ENCODE measurements at regions of chr11 and their contacts with region 1.

Region 1: GRCh38 chr11:61792310-61793085 is at the starts of genes FEN1 and TMEM258:
- DNase-seq: peak; percentile 94
- ATAC-seq: peak; percentile 93
- H3K4me3 Mint-ChIP-seq: peak within 1 kb of the TSS; percentile 90
- H3K27ac Mint-ChIP-seq: peak within 1 kb of the TSS; percentile 100
- H3K4me1 Mint-ChIP-seq: peaks cover 47% of the 10 kb centered on the region
- H3K27me3 Mint-ChIP-seq: no peaks in the 10 kb centered on the region
- total RNA-seq, gene FEN1: 141 to 150 TPM
- total RNA-seq, gene TMEM258: 138 to 157 TPM

Region 2: DNA sequence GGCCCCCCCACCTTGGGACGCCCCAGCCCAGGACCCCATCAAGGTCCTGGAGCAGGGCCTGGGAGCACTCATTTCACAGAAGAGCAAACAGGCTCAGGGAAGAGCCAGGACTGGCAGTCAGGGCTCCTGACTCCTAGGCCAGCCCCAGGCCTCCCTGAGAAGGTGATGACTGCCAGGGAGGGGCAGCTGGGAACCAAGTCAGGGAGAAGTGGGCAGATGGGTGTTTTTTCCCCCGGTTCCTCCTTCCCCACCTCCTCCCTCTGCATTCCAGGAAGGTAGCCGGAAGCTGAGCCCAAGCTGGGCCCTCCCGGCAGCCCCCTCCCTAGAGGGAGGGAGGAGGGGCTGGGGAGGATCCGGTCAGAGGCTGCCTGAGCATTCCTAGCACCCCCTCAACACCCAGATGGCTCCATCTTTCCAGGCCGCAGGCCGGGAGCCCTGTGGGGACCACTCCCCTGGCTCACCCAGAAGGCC is 20.5 kb before region 1 on chr11:
- CTCF ChIA-PET with region 1: interaction called, 10 read pairs
- DNase-seq: no peak
- ATAC-seq: no peak
- H3K4me3 Mint-ChIP-seq: no peak overlapping the region
- H3K27ac Mint-ChIP-seq: no peak overlapping the region
- H3K4me1 Mint-ChIP-seq: peaks cover 15% of the 10 kb centered on the region
- H3K27me3 Mint-ChIP-seq: peaks cover 5% of the 10 kb centered on the region

Region 3: GRCh38 chr11:61816736-61817455 is 24.4 kb after region 1 on chr11 and contains the start of gene FADS1:
- CTCF ChIA-PET with region 1: interaction called, 173 read pairs
- DNase-seq: peak; percentile 88
- ATAC-seq: peak; percentile 67
- H3K4me3 Mint-ChIP-seq: peak within 1 kb of the TSS; percentile 92
- H3K27ac Mint-ChIP-seq: peak within 1 kb of the TSS; percentile 91
- H3K4me1 Mint-ChIP-seq: peaks cover 11% of the 10 kb centered on the region
- H3K27me3 Mint-ChIP-seq: peaks cover 15% of the 10 kb centered on the region
- total RNA-seq, gene FADS1: 33.8 to 35.4 TPM

Region 4: GRCh38 chr11:61834278-61835048 is 42.0 kb after region 1 on chr11:
- CTCF ChIA-PET with region 1: interaction called, 15 read pairs
- DNase-seq: peak; percentile 91
- ATAC-seq: peak; percentile 99
- H3K4me3 Mint-ChIP-seq: peak overlapping the region; percentile 35
- H3K27ac Mint-ChIP-seq: peak overlapping the region; percentile 89
- H3K4me1 Mint-ChIP-seq: peaks cover 61% of the 10 kb centered on the region
- H3K27me3 Mint-ChIP-seq: no peaks in the 10 kb centered on the region

Region 5: GRCh38 chr11:61891331-61892084 is 99.0 kb after region 1 on chr11 and contains the start of gene FADS3:
- CTCF ChIA-PET with region 1: interaction called, 16 read pairs
- DNase-seq: peak; percentile 66
- ATAC-seq: peak; percentile 87
- H3K4me3 Mint-ChIP-seq: peak within 1 kb of the TSS; percentile 77
- H3K27ac Mint-ChIP-seq: no peak within 1 kb of the TSS
- H3K4me1 Mint-ChIP-seq: peaks cover 3% of the 10 kb centered on the region
- H3K27me3 Mint-ChIP-seq: peaks cover 9% of the 10 kb centered on the region
- total RNA-seq, gene FADS3: 2.6 to 7.7 TPM

Region 6: GRCh38 chr11:61947486-61948210 is 155.2 kb after region 1 on chr11:
- CTCF ChIA-PET with region 1: interaction called, 32 read pairs
- DNase-seq: peak; percentile 77
- ATAC-seq: peak; percentile 84
- H3K4me3 Mint-ChIP-seq: no peak overlapping the region
- H3K27ac Mint-ChIP-seq: no peak overlapping the region
- H3K4me1 Mint-ChIP-seq: no peaks in the 10 kb centered on the region
- H3K27me3 Mint-ChIP-seq: peaks cover 4% of the 10 kb centered on the region

Region 7: GRCh38 chr11:62108017-62108750 is 315.7 kb after region 1 on chr11:
- CTCF ChIA-PET with region 1: interaction called, 37 read pairs
- DNase-seq: peak; percentile 51
- ATAC-seq: no peak
- H3K4me3 Mint-ChIP-seq: no peak overlapping the region
- H3K27ac Mint-ChIP-seq: no peak overlapping the region
- H3K4me1 Mint-ChIP-seq: peaks cover 17% of the 10 kb centered on the region
- H3K27me3 Mint-ChIP-seq: peaks cover 14% of the 10 kb centered on the region

Region 8: GRCh38 chr11:62245271-62245753 is 452.8 kb after region 1 on chr11:
- CTCF ChIA-PET with region 1: no interaction called
- DNase-seq: peak; percentile 48
- ATAC-seq: peak; percentile 39
- H3K4me3 Mint-ChIP-seq: no peak overlapping the region
- H3K27ac Mint-ChIP-seq: no peak overlapping the region
- H3K4me1 Mint-ChIP-seq: no peaks in the 10 kb centered on the region
- H3K27me3 Mint-ChIP-seq: peaks cover 18% of the 10 kb centered on the region

Measured in activated CD8-positive, alpha-beta memory T cell treated with anti-CD3 and anti-CD28 coated beads, Interleukin-2, amount 10 ng/mL, durations not matched to agents 7 days and 5 days (primary cell).